ENCODE measurements at regions of chr13 and their contacts with region 1.

Region 1: DNA sequence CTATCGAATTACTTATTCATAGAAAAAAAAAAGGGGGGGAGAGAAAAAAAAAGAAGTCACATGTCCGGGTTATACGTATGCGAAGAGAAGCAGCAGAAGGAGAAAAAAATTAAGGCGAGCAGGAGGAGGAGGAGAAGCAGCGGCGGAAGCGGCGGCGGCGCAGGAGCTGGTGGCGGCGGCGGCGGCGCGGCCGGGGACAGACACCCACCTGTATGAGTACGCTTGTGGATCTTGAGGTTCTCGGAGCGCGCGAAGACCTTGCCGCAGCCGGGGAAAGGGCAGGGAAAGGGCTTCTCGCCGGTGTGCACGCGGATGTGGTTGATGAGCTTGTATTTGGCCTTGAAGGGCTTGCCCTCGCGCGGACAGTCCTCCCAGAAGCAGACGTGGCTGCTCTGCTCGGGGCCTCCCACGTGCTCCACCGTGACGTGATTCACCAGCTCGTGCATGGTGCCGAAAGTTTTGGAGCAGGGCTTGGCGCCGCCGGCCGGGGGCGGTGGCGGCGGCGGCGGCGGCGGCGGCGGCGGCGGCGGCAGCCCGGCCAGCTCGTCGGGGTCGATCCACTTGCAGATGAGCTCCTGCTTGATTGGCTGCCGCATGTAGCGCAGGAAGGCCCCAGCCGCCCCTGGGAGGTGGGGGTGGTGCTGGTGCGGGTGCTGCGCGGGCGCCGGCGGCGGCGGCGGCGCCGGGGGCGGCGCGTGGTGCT is 1.5 kb downstream of the ZIC5 start:
- DNase-seq: peak; percentile 93
- H3K4me3 ChIP-seq: peak overlapping the region; percentile 91
- H3K27ac ChIP-seq: peak overlapping the region; percentile 98
- H3K4me1 ChIP-seq: peaks cover 31% of the 10 kb centered on the region
- H3K27me3 ChIP-seq: no peaks in the 10 kb centered on the region
- CTCF ChIP-seq: no peak

Region 2: DNA sequence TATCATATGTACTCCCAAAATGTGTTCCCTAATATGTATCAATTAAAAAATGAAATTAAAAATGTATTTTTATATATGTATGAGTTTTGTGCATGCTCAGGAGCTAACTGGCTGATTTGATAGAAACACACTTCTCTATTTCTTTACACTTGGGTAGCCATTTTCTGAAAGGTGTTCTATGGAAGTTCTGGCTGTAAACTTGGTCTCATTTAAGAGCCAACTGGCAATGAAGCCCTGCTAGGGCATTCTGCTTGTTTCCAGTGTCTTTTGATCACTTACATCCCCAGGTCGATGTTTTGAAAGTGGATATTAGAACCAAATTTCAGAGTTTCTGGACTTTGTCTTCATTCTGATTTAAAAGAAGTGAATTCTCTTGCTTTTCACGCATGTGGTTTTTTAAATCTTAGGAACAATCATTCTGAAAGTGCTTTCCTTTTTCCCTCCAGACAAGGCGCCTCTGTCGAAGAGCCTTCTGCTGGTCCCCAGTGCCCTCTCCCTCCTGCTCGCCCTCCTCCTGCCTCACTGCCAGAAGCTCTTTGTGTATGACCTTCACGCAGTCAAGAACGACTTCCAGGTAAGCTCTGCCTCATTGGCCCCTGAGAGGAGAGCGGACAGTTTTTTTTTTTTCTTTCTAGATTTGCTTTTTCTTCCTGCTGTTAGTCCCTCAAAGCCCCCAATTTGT is 731.9 kb before region 1 on chr13:
- CTCF ChIA-PET with region 1: no interaction called
- POLR2A ChIA-PET with region 1: interaction called, 17 read pairs
- intact Hi-C with region 1: no loop called
- DNase-seq: no peak
- H3K4me3 ChIP-seq: no peak overlapping the region
- H3K27ac ChIP-seq: no peak overlapping the region
- H3K4me1 ChIP-seq: no peaks in the 10 kb centered on the region
- H3K27me3 ChIP-seq: no peaks in the 10 kb centered on the region
- CTCF ChIP-seq: no peak

Region 3: DNA sequence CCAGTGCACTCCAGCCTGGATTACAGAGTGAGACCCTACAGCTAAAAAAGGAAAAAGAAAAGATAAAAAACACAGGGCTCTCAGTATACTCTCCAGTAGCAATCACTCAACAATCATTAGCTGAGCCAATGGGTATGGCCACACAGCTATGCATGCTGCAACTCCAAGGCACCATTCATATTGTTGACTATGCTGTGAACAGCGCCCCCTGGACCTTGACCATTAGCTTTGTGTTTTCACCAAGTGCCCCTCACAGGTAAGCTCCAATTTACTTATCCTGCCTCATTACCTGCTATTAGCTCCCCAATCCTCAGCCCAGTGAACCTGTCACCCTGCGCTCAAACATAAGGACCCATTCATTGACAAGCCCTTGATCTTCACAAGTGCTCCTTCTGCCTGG is 34.3 kb before region 1 on chr13:
- CTCF ChIA-PET with region 1: no interaction called
- POLR2A ChIA-PET with region 1: no interaction called
- intact Hi-C with region 1: no loop called
- DNase-seq: no peak
- H3K4me3 ChIP-seq: no peak overlapping the region
- H3K27ac ChIP-seq: no peak overlapping the region
- H3K4me1 ChIP-seq: no peaks in the 10 kb centered on the region
- H3K27me3 ChIP-seq: no peaks in the 10 kb centered on the region
- CTCF ChIP-seq: peak; percentile 42

Region 4: DNA sequence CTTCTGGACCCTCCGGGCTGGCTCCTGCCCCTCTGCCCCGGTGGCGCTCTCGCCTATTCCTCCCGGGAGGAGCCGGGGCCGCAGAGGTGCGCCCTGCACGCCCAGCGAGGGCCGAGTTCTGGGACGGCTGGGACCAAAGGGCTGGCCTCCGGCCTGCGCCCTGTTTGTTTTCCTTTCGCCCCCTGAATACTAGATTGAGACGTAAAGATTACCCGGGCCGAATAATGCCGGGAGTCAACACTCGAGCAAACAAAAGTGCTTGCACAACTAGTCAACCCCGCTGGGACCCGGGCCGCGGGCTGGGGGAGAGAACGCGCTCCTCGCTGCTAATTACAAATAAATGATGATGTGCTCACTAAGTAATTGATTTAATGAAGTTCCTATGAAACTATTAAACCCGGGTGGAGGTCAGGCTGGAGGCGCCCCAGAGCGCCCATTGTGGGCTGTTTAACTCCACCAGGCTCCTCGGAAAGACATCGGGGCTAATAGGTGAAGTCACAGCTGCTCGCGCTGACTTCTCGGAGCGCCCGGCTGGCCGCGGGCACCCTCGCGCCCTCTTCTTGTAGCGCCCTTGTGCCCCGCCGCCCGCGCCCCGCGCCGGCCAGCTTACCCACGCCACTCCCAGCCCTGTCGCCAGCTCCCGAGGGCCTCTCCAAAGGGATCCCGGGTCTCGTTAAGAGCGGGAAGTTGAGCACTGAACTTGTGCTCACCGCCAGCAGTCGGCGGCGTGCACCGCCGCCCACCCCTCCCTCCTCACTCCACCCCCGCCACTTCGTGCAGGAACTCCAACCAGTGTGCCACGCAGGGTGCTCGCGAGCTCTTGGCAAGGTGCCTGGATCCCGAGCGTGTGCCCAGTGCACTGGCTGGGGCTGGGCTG is 13.4 kb before region 1 on chr13:
- CTCF ChIA-PET with region 1: no interaction called
- POLR2A ChIA-PET with region 1: interaction called, 18 read pairs
- intact Hi-C with region 1: no loop called
- DNase-seq: peak; percentile 78
- H3K4me3 ChIP-seq: peak overlapping the region; percentile 48
- H3K27ac ChIP-seq: peak overlapping the region; percentile 71
- H3K4me1 ChIP-seq: peaks cover 19% of the 10 kb centered on the region
- H3K27me3 ChIP-seq: no peaks in the 10 kb centered on the region
- CTCF ChIP-seq: peak; percentile 29

Region 5: DNA sequence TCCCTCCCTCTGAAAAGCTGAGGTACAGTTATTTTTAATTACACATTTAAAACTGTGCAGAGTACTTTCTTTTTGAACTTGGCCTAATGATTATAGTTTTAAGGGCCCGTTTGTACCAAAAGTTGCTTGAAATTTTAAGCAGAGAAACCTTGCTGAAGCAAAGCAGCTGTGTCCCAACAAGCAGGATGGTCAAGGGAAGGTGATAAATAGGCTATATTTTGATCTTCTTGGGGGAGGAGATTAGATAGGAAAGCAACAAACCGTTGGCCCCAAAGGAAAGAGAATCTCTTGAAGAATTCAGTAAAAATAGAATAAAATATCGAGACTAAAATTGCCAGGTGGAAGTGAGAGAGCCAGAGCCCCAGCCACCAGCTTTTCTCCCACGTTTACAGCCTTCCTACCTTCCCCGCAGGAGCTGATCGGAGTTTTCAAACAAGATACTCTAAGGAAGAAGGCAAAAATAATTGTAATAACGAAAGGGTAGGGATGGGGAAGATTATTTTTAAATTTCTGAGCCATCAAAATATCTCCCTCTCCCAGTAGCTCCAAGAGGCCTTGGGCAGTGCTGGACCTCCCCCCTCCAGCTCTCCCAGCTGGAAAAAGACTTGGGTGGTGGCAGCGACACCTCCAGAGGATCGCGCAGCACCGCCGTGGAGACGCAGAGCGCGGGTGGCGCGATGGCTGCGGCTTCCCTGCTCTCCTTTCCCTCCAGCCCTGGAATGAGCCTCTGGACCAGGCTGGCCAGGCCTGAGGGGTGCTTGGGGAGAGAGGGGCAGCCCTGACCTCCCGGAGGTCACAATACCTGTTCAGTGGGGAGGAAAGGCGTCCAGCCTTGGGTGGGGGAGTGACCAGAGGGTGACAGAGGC is 17.3 kb after region 1 on chr13:
- CTCF ChIA-PET with region 1: no interaction called
- POLR2A ChIA-PET with region 1: interaction called, 3 read pairs
- intact Hi-C with region 1: loop called (anchors 2 kb)
- DNase-seq: peak; percentile 83
- H3K4me3 ChIP-seq: peak overlapping the region; percentile 95
- H3K27ac ChIP-seq: peak overlapping the region; percentile 96
- H3K4me1 ChIP-seq: peaks cover 47% of the 10 kb centered on the region
- H3K27me3 ChIP-seq: no peaks in the 10 kb centered on the region
- CTCF ChIP-seq: 0 out of 2 replicates have a peak, but pooled peaks have one; percentile 19

Region 6: DNA sequence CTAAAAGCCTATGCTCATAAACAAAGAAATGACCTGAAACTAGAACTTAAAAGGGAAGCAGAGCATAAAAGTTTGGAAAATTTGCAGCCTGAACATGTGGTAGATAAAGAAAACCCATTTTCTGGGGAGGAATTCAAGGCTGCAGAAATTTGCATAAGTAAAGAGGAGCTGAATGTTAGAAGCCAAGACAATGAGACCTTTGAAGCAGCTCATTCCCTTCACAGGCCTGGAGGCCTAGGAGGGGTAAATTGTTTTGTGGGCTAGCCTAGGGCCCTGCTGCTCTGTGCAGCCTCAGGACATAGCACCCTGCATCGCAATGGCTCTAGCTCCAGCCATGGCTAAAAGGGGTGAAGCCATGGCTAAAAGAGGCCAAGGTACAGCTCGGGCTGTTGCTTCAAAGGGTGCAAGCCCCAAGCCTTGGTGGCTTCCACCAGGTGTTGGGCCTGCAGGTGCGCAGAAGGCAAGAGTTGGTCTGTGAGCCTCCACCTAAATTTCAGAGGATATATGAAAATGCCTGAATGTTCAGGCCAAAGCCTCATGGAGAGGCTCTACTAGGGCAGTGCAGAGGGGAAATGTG is 49.8 kb after region 1 on chr13:
- CTCF ChIA-PET with region 1: no interaction called
- POLR2A ChIA-PET with region 1: no interaction called
- intact Hi-C with region 1: no loop called
- DNase-seq: no peak
- H3K4me3 ChIP-seq: no peak overlapping the region
- H3K27ac ChIP-seq: no peak overlapping the region
- H3K4me1 ChIP-seq: no peaks in the 10 kb centered on the region
- H3K27me3 ChIP-seq: no peaks in the 10 kb centered on the region
- CTCF ChIP-seq: no peak

Region 7: DNA sequence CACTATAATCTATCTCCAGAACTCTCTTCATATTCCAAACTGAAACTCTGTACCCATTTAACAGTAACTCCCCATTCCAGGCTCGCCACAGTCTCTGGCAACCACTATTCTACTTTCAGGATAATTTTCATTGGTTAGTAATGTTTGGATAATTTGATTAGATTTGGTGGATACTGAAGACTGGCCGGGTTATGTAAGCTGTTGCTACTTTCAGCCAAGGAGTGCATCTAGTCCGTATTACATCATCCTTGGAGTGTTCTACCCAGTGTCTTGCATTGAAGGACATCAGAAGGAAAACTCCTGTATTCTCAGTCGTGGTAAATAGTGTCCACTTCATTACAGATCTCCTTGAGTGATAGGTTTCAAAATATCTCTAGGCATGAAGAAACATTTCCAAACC is 179.3 kb after region 1 on chr13:
- CTCF ChIA-PET with region 1: no interaction called
- POLR2A ChIA-PET with region 1: no interaction called
- intact Hi-C with region 1: no loop called
- DNase-seq: no peak
- H3K4me3 ChIP-seq: no peak overlapping the region
- H3K27ac ChIP-seq: no peak overlapping the region
- H3K4me1 ChIP-seq: no peaks in the 10 kb centered on the region
- H3K27me3 ChIP-seq: no peaks in the 10 kb centered on the region
- CTCF ChIP-seq: no peak

Measured in A673 (cell line).